PC-3 (cell line): ENCODE measurements at regions of chr17 and their contacts with region 1.

Region 1: DNA sequence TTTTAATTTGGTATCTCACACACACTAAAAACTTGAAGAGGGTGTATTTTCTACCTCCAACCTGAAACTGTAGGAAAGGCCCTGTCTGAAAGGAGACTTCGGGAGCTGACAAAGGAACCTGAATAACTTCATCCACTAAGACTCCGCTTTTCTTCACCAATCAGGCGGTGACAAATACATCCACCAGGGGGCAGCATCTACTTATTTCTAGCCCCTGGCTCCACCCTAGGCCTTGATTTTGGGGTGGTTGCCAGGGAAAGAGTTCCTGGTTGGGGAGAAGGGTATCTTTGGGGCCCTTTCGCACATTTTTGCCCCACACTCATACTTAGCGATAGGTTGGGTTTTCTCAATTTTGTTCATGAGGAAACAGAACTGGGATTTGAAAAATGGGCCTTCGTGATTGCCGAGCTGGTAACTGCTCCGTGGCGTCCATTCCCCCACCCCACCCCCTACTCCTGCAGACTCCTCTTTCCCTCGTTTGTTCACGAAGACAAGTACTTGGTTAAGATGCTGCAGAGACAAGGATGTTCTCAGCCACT is 4.8 kb upstream of the ARL4D start:
- DNase-seq: peak; percentile 89
- ATAC-seq: peak; percentile 50
- H3K4me3 ChIP-seq: no peak overlapping the region
- H3K27ac ChIP-seq: no peak overlapping the region
- H3K4me1 ChIP-seq: peaks cover 6% of the 10 kb centered on the region
- H3K27me3 ChIP-seq: no peaks in the 10 kb centered on the region
- CTCF ChIP-seq: peak; percentile 88

Region 2: DNA sequence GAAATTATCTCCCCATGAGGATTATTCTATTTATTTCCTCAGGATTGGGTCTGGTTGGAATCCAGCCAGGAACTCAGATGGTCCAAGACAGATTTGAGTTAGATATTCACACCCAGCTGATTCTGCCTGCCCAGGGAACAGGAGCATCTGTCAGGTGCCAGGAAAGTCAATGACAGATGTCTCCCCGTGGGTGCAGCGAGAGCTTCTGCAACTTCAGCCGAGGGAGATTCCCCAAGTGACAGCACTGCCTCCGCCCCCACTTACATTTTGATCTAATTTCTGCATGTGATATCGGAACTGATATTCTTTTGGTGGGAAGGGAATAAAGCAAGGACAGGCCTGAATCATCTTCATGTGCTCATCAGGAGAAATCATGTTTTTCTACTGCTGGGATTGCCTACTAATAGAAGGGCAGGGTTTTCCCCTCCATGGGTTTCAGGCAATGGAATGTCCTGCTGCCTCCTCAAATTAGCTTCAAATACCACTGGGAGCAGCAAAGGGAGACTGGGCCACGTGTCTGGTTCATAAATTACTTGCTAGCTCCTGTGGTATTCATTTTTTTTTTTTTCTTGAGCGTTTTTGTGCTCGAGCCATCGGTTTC is 74.1 kb after region 1 on chr17:
- CTCF ChIA-PET with region 1: no interaction called
- POLR2A ChIA-PET with region 1: interaction called, 10 read pairs
- intact Hi-C with region 1: no loop called
- DNase-seq: no peak
- ATAC-seq: no peak
- H3K4me3 ChIP-seq: no peak overlapping the region
- H3K27ac ChIP-seq: peak overlapping the region; percentile 97
- H3K4me1 ChIP-seq: peaks cover 21% of the 10 kb centered on the region
- H3K27me3 ChIP-seq: no peaks in the 10 kb centered on the region
- CTCF ChIP-seq: no peak

Region 3: GRCh38 chr17:43483674-43484372 is 89.8 kb after region 1 on chr17 and contains the start of gene DHX8:
- CTCF ChIA-PET with region 1: interaction called, 11 read pairs
- POLR2A ChIA-PET with region 1: interaction called, 3 read pairs
- intact Hi-C with region 1: loop called (anchors 2 kb)
- DNase-seq: peak; percentile 95
- ATAC-seq: peak; percentile 93
- H3K4me3 ChIP-seq: peak within 1 kb of the TSS; percentile 94
- H3K27ac ChIP-seq: peak within 1 kb of the TSS; percentile 65
- H3K4me1 ChIP-seq: peaks cover 17% of the 10 kb centered on the region; the same call in 1 of the 2 replicates
- H3K27me3 ChIP-seq: no peaks in the 10 kb centered on the region
- CTCF ChIP-seq: peak; percentile 99
- total RNA-seq, gene DHX8: 34.5 and 41.9 TPM in 2 replicates

Region 4: DNA sequence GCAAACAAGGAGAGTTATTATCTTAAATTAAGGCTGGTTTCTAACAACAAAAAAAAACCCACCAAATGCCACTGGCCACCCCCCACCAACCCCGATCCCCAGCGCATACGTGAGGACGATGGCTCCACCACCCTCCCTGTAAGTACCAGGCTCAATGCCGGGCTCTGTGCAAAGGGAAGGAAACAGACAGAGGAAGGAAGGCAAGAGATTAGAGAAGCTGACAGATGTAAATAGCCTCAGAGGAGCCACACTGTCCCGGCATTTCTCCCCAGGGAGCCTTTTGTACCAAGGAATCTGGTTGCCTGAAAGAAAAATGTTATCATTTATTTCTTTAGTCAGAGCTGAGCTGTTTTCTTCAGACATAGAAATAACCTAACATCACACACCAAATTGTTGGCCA is 351.5 kb after region 1 on chr17:
- CTCF ChIA-PET with region 1: no interaction called
- POLR2A ChIA-PET with region 1: no interaction called
- intact Hi-C with region 1: no loop called
- DNase-seq: no peak
- ATAC-seq: no peak
- H3K4me3 ChIP-seq: no peak overlapping the region
- H3K27ac ChIP-seq: no peak overlapping the region
- H3K4me1 ChIP-seq: peaks cover 22% of the 10 kb centered on the region
- H3K27me3 ChIP-seq: no peaks in the 10 kb centered on the region
- CTCF ChIP-seq: no peak